Activated CD4-positive, alpha-beta T cell treated with anti-CD3 and anti-CD28 coated beads, Interleukin-2, amount 10 ng/mL, durations not matched to agents 7 days and 5 days (primary cell): ENCODE measurements at regions of chr10 and their contacts with region 1.

Region 1: DNA sequence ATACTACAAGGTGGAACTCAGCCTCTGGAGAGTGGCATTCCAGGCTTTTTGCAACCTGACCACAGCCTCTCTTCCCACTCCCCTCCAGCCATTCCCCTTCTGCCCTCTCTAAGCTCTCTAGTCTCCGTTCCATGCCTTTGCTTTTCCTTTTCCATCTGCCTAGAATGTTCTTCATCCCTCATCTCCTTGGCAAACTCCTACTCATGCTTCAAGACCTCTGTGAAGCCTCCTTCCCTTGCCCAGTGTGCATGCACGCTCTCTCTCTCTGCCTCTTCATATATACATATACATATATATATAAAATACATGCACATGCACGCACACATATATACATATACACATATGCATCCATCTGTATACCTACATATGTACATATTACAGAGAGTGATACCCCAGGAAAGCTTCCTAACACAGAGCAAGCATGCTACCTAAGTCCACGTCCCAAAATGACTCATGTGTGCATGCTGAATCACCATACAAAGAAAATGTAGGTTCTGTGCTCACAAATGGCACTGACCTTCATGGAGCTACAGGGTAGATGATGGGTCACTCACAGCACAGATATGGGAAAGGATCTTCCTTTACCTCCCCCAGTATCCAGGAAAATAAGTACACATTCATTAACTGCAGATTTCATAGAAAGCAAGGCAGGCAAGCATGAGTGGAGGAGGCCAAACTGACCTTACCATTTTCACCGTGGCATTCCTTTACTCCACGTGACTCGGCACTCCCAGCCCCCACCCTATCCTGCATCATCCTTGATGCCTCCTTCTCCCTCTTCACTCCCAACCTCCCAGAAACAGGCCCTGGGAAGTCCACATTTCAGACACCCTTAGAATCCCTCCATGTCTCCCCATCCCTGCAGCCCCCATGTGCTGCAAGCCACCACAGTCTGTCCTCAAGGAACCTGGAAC is 238.4 kb upstream of the ZMIZ1 start:
- DNase-seq: no peak
- H3K4me3 Mint-ChIP-seq: no peak overlapping the region
- H3K27ac Mint-ChIP-seq: no peak overlapping the region
- H3K4me1 Mint-ChIP-seq: no peaks in the 10 kb centered on the region
- H3K27me3 Mint-ChIP-seq: peaks cover 8% of the 10 kb centered on the region

Region 2: GRCh38 chr10:77011874-77012811 is 1818.2 kb before region 1 on chr10:
- CTCF ChIA-PET with region 1: no interaction called
- POLR2A ChIA-PET with region 1: interaction called, 10 read pairs
- DNase-seq: no peak
- H3K4me3 Mint-ChIP-seq: no peak overlapping the region
- H3K27ac Mint-ChIP-seq: no peak overlapping the region
- H3K4me1 Mint-ChIP-seq: no peaks in the 10 kb centered on the region
- H3K27me3 Mint-ChIP-seq: no peaks in the 10 kb centered on the region